ENCODE measurements at regions of chr19 and their contacts with region 1.

Region 1: GRCh38 chr19:48993175-48994034 is at the starts of genes GYS1 and RUVBL2:
- DNase-seq: peak; percentile 98 to 100
- ATAC-seq: peak; percentile 73 to 75
- H3K4me3 ChIP-seq: peak within 1 kb of the TSS; percentile 75 to 99 (median 84)
- H3K27ac ChIP-seq: peak within 1 kb of the TSS; percentile 93 to 100 (median 99)
- H3K4me1 ChIP-seq: peaks cover 44 to 51% of the 10 kb centered on the region in 2 donors
- H3K27me3 ChIP-seq: no peaks in the 10 kb centered on the region
- CTCF ChIP-seq: peak; percentile 98 to 99 (median 99)
- POLR2A ChIP-seq: peak; percentile 98 to 99
- total RNA-seq, gene GYS1: 110 to 221 (median 126) TPM
- total RNA-seq, gene RUVBL2: 134 to 185 (median 146) TPM

Region 2: GRCh38 chr19:48637170-48637947 is 356.0 kb before region 1 on chr19 and contains the start of gene DBP:
- in situ Hi-C with region 1: no loop called
- intact Hi-C with region 1: loop called (anchors 2 kb)
- DNase-seq: peak; percentile 99 to 100
- ATAC-seq: peak; percentile 52 to 55
- H3K4me3 ChIP-seq: peak within 1 kb of the TSS; percentile 58 to 95 (median 76)
- H3K27ac ChIP-seq: peak within 1 kb of the TSS; percentile 97 to 100 (median 100)
- H3K4me1 ChIP-seq: peaks cover 37 to 46% of the 10 kb centered on the region in 2 donors
- H3K27me3 ChIP-seq: no peaks in the 10 kb centered on the region
- CTCF ChIP-seq: peak in 1 of 5 experiments; percentile 21
- POLR2A ChIP-seq: peak; percentile 59 to 76
- total RNA-seq, gene DBP: 1.7 to 12.9 (median 4.4) TPM

Region 3: DNA sequence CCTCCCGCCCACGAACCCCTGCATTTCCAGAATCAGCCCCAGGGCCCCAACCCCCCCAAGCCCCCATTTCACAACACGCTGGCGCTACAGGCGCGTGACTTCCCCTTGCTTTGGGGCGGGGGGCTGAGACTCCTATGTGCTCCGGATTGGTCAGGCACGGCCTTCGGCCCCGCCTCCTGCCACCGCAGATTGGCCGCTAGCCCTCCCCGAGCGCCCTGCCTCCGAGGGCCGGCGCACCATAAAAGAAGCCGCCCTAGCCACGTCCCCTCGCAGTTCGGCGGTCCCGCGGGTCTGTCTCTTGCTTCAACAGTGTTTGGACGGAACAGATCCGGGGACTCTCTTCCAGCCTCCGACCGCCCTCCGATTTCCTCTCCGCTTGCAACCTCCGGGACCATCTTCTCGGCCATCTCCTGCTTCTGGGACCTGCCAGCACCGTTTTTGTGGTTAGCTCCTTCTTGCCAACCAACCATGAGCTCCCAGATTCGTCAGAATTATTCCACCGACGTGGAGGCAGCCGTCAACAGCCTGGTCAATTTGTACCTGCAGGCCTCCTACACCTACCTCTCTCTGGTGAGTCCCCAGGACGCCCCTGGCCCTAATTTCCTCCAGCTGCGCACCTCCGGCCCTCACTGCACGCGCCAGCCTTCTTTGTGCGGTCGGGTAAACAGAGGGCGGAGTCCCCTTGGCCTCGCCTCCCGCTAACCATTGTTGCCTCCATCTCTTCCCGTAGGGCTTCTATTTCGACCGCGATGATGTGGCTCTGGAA is 28.2 kb before region 1 on chr19 and contains the start of gene FTL:
- in situ Hi-C with region 1: no loop called
- intact Hi-C with region 1: loop called (anchors 1 kb)
- DNase-seq: peak; percentile 97 to 98
- ATAC-seq: peak; percentile 66 to 67
- H3K4me3 ChIP-seq: peak within 1 kb of the TSS; percentile 95 to 97 (median 96)
- H3K27ac ChIP-seq: peak within 1 kb of the TSS; percentile 89 to 99 (median 98)
- H3K4me1 ChIP-seq: peaks cover 30 to 48% of the 10 kb centered on the region in 2 donors
- H3K27me3 ChIP-seq: no peaks in the 10 kb centered on the region
- CTCF ChIP-seq: no peak
- POLR2A ChIP-seq: peak; percentile 99 to 100
- total RNA-seq, gene FTL: 894 to 1,364 (median 1,121) TPM

Region 4: GRCh38 chr19:49148784-49149651 is 155.6 kb after region 1 on chr19:
- in situ Hi-C with region 1: no loop called
- intact Hi-C with region 1: loop called (anchors 2 kb)
- DNase-seq: peak; percentile 96 to 98
- ATAC-seq: peak; percentile 68 to 70
- H3K4me3 ChIP-seq: peak overlapping the region; percentile 64 to 87 (median 83)
- H3K27ac ChIP-seq: peak overlapping the region; percentile 99 to 100 (median 99)
- H3K4me1 ChIP-seq: peaks cover 29 to 60% of the 10 kb centered on the region in 2 donors
- H3K27me3 ChIP-seq: no peaks in the 10 kb centered on the region
- CTCF ChIP-seq: no peak
- POLR2A ChIP-seq: peak; percentile 64 to 79